B cell (primary cell): ENCODE measurements at regions of chr11 and their contacts with region 1.

Region 1: DNA sequence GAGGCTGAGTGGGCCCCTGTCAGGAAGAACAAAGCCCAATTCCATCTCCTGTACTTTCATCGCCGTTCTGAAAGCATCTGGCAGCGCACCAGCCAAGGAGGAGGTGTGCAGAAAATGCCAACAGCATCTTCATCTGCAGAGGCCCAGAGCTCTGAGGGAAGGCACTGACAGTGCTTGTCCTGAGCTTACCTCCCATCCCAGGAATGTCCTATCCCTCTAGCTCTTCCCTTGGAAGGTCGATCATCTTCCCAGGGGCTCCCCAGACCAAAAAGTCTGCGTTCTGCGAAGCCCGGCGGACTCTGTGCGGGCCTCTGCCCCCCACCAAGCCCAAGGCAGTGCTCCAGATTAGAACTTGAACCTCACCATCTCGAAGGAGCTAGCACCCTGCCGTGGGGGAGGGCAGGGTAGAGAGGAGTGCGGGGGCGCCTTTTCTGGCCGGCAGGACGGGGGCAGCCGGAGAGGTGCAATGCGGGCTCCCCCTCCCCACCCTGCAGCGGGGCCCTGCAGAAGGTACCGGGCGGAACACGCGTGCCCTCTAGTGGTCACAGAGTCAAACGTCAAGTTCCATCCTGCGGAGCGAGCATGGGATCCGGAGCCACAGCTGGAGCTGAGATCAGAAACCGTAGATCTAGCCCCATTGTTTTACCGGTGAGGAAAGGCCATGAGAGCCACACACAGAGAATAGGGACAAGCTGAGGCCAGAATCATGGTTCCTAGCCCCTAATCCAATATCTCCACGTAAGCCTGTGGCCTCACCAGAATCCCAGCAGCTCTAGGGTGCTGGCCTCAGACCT is 5.0 kb downstream of the SCN2B start:
- DNase-seq: peak; percentile 77
- ATAC-seq: peak; percentile 88
- H3K4me3 ChIP-seq: no peak overlapping the region
- H3K4me3 Mint-ChIP-seq: no peak overlapping the region
- H3K27ac ChIP-seq: no peak overlapping the region
- H3K27ac Mint-ChIP-seq: no peak overlapping the region
- H3K4me1 ChIP-seq: peaks cover 0 to 5% of the 10 kb centered on the region in 2 donors
- H3K4me1 Mint-ChIP-seq: peaks cover 3% of the 10 kb centered on the region
- H3K27me3 ChIP-seq: peaks cover 0 to 15% (median 1%) of the 10 kb centered on the region in 4 experiments
- H3K27me3 Mint-ChIP-seq: peaks cover 46% of the 10 kb centered on the region
- CTCF ChIP-seq: peak; percentile 96

Region 2: GRCh38 chr11:117426269-117426685 is 745.2 kb before region 1 on chr11:
- CTCF ChIA-PET with region 1: interaction called, 19 read pairs
- POLR2A ChIA-PET with region 1: no interaction called
- intact Hi-C with region 1: no loop called
- DNase-seq: peak; percentile 65
- ATAC-seq: peak; percentile 49
- H3K4me3 ChIP-seq: no peak overlapping the region
- H3K4me3 Mint-ChIP-seq: no peak overlapping the region
- H3K27ac ChIP-seq: no peak overlapping the region
- H3K27ac Mint-ChIP-seq: peak overlapping the region; percentile 37
- H3K4me1 ChIP-seq: peaks cover 0 to 8% of the 10 kb centered on the region in 2 donors
- H3K4me1 Mint-ChIP-seq: peaks cover 8% of the 10 kb centered on the region
- H3K27me3 ChIP-seq: peaks cover 0 to 13% (median 0%) of the 10 kb centered on the region in 4 experiments
- H3K27me3 Mint-ChIP-seq: peaks cover 5% of the 10 kb centered on the region
- CTCF ChIP-seq: peak; percentile 97

Region 3: GRCh38 chr11:117807482-117808327 is 363.8 kb before region 1 on chr11:
- CTCF ChIA-PET with region 1: interaction called, 63 read pairs
- POLR2A ChIA-PET with region 1: no interaction called
- intact Hi-C with region 1: no loop called
- DNase-seq: peak; percentile 80
- ATAC-seq: peak; percentile 81
- H3K4me3 ChIP-seq: no peak overlapping the region
- H3K4me3 Mint-ChIP-seq: no peak overlapping the region
- H3K27ac ChIP-seq: no peak overlapping the region
- H3K27ac Mint-ChIP-seq: no peak overlapping the region
- H3K4me1 ChIP-seq: peaks cover 0 to 9% of the 10 kb centered on the region in 2 donors
- H3K4me1 Mint-ChIP-seq: peaks cover 5% of the 10 kb centered on the region
- H3K27me3 ChIP-seq: peaks cover 0 to 9% (median 0%) of the 10 kb centered on the region in 4 experiments
- H3K27me3 Mint-ChIP-seq: peaks cover 10% of the 10 kb centered on the region
- CTCF ChIP-seq: peak; percentile 97

Region 4: GRCh38 chr11:118184784-118185579 is 13.5 kb after region 1 on chr11:
- CTCF ChIA-PET with region 1: interaction called, 10 read pairs
- POLR2A ChIA-PET with region 1: no interaction called
- intact Hi-C with region 1: no loop called
- DNase-seq: no peak
- ATAC-seq: no peak
- H3K4me3 ChIP-seq: no peak overlapping the region
- H3K4me3 Mint-ChIP-seq: no peak overlapping the region
- H3K27ac ChIP-seq: no peak overlapping the region
- H3K27ac Mint-ChIP-seq: no peak overlapping the region
- H3K4me1 ChIP-seq: no peaks in the 10 kb centered on the region
- H3K4me1 Mint-ChIP-seq: no peaks in the 10 kb centered on the region
- H3K27me3 ChIP-seq: peaks cover 0 to 15% (median under 1%) of the 10 kb centered on the region in 4 experiments
- H3K27me3 Mint-ChIP-seq: peaks cover 42% of the 10 kb centered on the region
- CTCF ChIP-seq: no peak

Region 5: DNA sequence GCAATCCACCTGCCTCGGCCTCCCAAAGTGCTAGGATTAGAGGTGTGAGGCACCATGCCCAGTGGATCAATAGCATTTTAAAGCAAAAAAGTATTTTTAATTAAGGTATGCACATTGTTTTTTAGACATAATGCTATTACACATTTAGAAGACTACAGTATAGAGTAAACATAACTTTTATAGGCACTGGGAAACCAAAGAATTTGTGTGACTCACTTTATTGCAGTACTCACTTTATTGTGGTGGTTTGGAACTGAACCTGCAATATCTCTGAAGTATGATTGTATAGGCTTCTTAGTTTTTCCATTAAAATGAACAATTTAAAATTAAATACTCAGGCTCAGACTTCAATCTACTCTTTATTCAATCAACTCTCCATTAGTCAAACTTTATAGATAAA is 115.5 kb after region 1 on chr11:
- CTCF ChIA-PET with region 1: no interaction called
- POLR2A ChIA-PET with region 1: no interaction called
- intact Hi-C with region 1: no loop called
- DNase-seq: no peak
- ATAC-seq: no peak
- H3K4me3 ChIP-seq: no peak overlapping the region
- H3K4me3 Mint-ChIP-seq: no peak overlapping the region
- H3K27ac ChIP-seq: no peak overlapping the region
- H3K27ac Mint-ChIP-seq: no peak overlapping the region
- H3K4me1 ChIP-seq: no peaks in the 10 kb centered on the region
- H3K4me1 Mint-ChIP-seq: peaks cover 2% of the 10 kb centered on the region
- H3K27me3 ChIP-seq: peaks cover 0 to 4% (median 0%) of the 10 kb centered on the region in 4 experiments
- H3K27me3 Mint-ChIP-seq: peaks cover 23% of the 10 kb centered on the region
- CTCF ChIP-seq: no peak